ENCODE measurements at regions of chr5 and their contacts with region 1.

Region 1: GRCh38 chr5:10747678-10748622 is 13.1 kb downstream of the DAP start:
- DNase-seq: no peak
- ATAC-seq: no peak
- H3K4me3 ChIP-seq: no peak overlapping the region
- H3K27ac ChIP-seq: no peak overlapping the region
- H3K4me1 ChIP-seq: no peaks in the 10 kb centered on the region
- H3K27me3 ChIP-seq: no peaks in the 10 kb centered on the region
- CTCF ChIP-seq: no peak

Region 2: GRCh38 chr5:10366310-10367297 is 381.3 kb before region 1 on chr5:
- CTCF ChIA-PET with region 1: no interaction called
- POLR2A ChIA-PET with region 1: interaction called, 11 read pairs
- in situ Hi-C with region 1: no loop called
- intact Hi-C with region 1: no loop called
- DNase-seq: no peak
- ATAC-seq: peak; percentile 60
- H3K4me3 ChIP-seq: no peak overlapping the region
- H3K27ac ChIP-seq: peak overlapping the region; percentile 36
- H3K4me1 ChIP-seq: peaks cover 26% of the 10 kb centered on the region
- H3K27me3 ChIP-seq: no peaks in the 10 kb centered on the region
- CTCF ChIP-seq: no peak

Region 3: DNA sequence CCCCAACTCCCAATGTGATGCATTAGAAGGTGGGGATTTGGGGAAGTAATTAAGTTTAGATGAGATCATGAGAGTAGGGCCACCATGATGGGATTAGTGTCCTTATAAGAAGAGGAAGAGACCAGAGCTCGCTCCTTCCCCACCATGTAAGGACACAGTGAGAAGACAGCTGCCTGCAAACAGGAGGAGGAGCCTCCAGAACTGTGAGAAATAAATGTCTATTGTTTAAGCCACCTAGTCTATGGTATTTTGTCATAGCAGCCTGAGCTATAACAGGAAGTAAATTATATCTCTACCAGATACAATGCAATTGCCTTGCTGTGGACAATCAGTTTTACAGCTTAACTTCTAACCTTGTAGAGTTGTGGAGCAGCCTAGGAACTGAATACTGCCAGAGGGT is 126.1 kb before region 1 on chr5:
- CTCF ChIA-PET with region 1: no interaction called
- POLR2A ChIA-PET with region 1: no interaction called
- in situ Hi-C with region 1: no loop called
- intact Hi-C with region 1: no loop called
- DNase-seq: no peak
- ATAC-seq: no peak
- H3K4me3 ChIP-seq: no peak overlapping the region
- H3K27ac ChIP-seq: no peak overlapping the region
- H3K4me1 ChIP-seq: peaks cover 3% of the 10 kb centered on the region
- H3K27me3 ChIP-seq: no peaks in the 10 kb centered on the region
- CTCF ChIP-seq: no peak

Region 4: GRCh38 chr5:10635257-10635866 is 112.6 kb before region 1 on chr5:
- CTCF ChIA-PET with region 1: no interaction called
- POLR2A ChIA-PET with region 1: no interaction called
- in situ Hi-C with region 1: no loop called
- intact Hi-C with region 1: no loop called
- DNase-seq: no peak
- ATAC-seq: no peak
- H3K4me3 ChIP-seq: no peak overlapping the region
- H3K27ac ChIP-seq: no peak overlapping the region
- H3K4me1 ChIP-seq: 0 out of 2 replicates have a peak, but pooled peaks cover 5% of the 10 kb centered on the region
- H3K27me3 ChIP-seq: no peaks in the 10 kb centered on the region
- CTCF ChIP-seq: no peak

Measured in Panc1 (cell line).